ENCODE measurements at regions of chr17 and their contacts with region 1.

Region 1: DNA sequence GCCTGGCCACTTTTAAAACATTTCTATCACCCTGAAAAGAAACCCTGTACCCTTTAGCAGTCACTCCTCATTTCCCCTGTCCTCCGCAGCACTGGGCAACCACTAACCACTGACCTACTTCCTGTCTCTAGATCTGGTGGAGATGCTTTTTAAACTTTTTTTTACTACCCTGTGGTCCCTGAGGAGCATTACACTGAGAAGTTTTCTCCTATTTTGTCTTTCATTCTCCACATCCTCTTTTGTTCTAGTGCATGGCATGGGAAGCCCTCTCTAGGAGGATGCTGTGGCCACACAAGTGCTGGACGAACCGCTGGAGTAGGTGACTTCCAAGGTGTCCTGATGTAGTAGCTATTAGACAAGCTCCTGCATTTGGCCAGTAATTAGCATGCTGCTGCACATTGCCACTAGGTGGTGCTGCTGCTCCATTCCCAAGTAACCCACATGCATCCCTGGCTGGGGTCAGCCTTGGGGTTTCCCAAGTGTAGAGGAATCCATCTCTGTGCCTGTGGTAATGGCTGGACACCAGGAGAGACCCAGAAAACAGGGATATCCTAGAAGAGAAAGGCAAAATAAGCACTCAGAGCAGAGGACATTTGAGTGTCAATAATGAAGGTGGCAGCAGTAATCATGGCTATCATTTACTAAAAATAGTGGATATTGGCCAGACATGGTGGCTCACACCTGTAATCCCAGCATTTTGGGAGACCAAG is 143.8 kb upstream of the CRHR1 start:
- DNase-seq: peak; percentile 65 to 66
- H3K4me3 ChIP-seq: no peak overlapping the region
- H3K27ac ChIP-seq: no peak overlapping the region
- H3K4me1 ChIP-seq: 0 out of 2 replicates have a peak, but pooled peaks cover 5% of the 10 kb centered on the region
- H3K27me3 ChIP-seq: peaks cover 11% of the 10 kb centered on the region
- CTCF ChIP-seq: peak; percentile 99

Region 2: DNA sequence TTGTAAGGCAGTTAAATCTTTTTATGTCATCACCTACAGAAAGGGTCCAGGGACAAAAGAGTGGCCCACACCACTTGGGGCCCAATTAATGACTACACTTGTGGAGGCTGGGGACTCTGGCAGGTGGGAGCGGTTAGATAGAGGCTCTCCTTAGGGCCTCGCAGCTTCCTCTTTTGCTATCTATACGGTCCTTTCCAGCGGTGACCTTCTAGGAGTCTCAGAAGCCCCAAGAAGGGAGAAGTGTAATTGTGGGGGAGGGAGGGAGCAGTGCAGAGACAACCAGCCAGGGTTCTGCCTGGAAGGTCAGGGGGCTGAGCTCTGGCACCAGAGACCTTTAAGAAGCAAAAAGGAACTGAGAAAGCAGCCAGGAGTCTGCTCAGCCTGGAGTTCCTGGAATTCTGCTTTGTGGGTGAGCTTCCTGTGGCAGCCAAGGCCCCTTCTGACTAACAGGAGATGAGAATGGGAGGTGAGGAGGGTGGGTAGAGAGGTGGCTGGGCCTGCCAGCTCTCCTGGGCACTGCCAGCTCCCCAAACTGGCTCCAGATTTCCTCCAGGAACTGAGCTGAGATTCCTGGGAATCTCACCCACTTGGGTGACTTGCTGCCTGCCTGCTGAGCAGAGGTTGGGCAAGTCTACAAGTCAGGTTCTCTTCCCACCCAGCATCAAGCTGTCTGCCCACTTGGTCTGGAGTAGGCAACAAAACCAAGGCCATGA is 307.2 kb before region 1 on chr17:
- CTCF ChIA-PET with region 1: no interaction called
- POLR2A ChIA-PET with region 1: no interaction called
- intact Hi-C with region 1: no loop called
- DNase-seq: no peak
- H3K4me3 ChIP-seq: no peak overlapping the region
- H3K27ac ChIP-seq: no peak overlapping the region
- H3K4me1 ChIP-seq: peaks cover 26% of the 10 kb centered on the region
- H3K27me3 ChIP-seq: no peaks in the 10 kb centered on the region
- CTCF ChIP-seq: no peak

Region 3: DNA sequence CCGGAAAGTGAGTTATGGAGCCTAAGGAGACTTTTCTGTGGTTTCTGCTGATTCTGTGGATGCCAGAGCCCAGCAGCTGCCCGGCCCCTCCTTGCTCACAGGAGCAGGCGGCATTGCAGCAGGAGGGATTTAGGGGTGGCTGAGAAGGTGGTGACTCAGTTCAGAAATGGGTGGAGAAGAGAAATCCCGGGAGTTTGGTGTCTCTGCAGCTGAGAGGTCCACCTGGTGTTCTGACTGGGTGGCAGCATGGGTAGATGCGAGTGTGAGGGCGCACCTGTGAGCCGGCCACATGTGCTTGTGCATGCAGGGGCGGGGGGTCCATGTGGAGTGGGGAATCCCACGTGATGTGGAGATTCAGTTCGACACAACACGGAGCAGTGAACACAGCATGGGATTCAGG is 188.3 kb after region 1 on chr17:
- CTCF ChIA-PET with region 1: interaction called, 7 read pairs
- POLR2A ChIA-PET with region 1: interaction called, 4 read pairs
- intact Hi-C with region 1: loop called (anchors 1 kb)
- DNase-seq: peak in 1 of 2 experiments; percentile 17
- H3K4me3 ChIP-seq: no peak overlapping the region
- H3K27ac ChIP-seq: no peak overlapping the region
- H3K4me1 ChIP-seq: no peaks in the 10 kb centered on the region
- H3K27me3 ChIP-seq: peaks cover 80% of the 10 kb centered on the region
- CTCF ChIP-seq: peak; percentile 40; the same call in 1 of the 2 replicates

Region 4: DNA sequence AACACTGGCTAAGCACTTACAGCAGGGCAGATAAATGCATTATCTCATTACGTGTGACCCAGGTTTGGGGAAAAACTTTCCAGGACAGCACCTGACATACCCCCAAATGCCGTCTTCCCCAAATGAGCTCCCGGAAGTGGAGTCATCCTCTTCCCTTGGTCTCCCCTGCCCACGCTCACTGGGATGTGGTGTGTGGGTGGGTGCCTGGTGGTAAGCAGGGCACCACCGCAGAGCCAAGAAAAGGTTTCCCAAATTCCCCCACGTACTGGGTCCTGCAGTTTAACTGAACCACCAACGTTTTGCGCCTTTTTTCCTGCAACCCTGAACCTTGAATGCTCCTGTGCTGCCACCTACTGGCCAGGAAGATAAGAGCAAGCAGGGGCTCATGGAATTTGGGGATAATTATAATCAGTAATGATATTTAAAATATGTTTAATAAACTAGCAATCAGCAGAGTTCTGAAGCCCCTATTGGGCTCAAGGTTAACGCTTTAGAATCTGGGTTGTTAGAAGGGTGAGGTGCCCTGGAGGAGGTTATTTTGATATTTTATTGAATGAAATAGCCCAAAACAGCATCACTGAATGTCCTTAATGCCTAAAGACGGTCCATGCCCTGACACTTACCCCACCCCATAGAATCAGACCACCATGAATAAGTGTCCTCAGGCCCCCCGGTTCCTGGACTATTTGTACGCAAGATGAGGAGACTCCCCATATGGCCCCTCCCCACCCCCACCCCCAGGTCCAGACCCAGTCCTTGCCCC is 212.4 kb after region 1 on chr17:
- CTCF ChIA-PET with region 1: interaction called, 3 read pairs
- POLR2A ChIA-PET with region 1: no interaction called
- intact Hi-C with region 1: loop called (anchors 2 kb)
- DNase-seq: peak in 1 of 2 experiments; percentile 64
- H3K4me3 ChIP-seq: no peak overlapping the region
- H3K27ac ChIP-seq: no peak overlapping the region
- H3K4me1 ChIP-seq: no peaks in the 10 kb centered on the region
- H3K27me3 ChIP-seq: peaks cover 74% of the 10 kb centered on the region
- CTCF ChIP-seq: peak; percentile 99

Measured in PC-9 (cell line).